Mammary epithelial cell (primary cell): ENCODE measurements at regions of chr16 and their contacts with region 1.

Region 1: GRCh38 chr16:11851294-11852091 is at the start of gene RSL1D1:
- DNase-seq: peak; percentile 94
- H3K4me3 ChIP-seq: peak within 1 kb of the TSS; percentile 77 to 100 (median 87)
- H3K27ac ChIP-seq: peak within 1 kb of the TSS; percentile 70
- H3K4me1 ChIP-seq: peaks cover 11% of the 10 kb centered on the region
- H3K27me3 ChIP-seq: no peaks in the 10 kb centered on the region
- CTCF ChIP-seq: no peak
- total RNA-seq, gene RSL1D1: 127 to 209 TPM

Region 2: GRCh38 chr16:11797166-11797956 is 54.1 kb before region 1 on chr16 and contains the start of gene ZC3H7A:
- CTCF ChIA-PET with region 1: no interaction called
- dilution Hi-C with region 1: no loop called
- in situ Hi-C with region 1: no loop called
- intact Hi-C with region 1: no loop called
- DNase-seq: peak; percentile 97
- H3K4me3 ChIP-seq: peak within 1 kb of the TSS; percentile 80 to 98 (median 82)
- H3K27ac ChIP-seq: peak within 1 kb of the TSS; percentile 92
- H3K4me1 ChIP-seq: peaks cover 47% of the 10 kb centered on the region
- H3K27me3 ChIP-seq: no peaks in the 10 kb centered on the region
- CTCF ChIP-seq: peak; percentile 39 to 43
- total RNA-seq, gene ZC3H7A: 42.5 to 64.1 TPM

Region 3: DNA sequence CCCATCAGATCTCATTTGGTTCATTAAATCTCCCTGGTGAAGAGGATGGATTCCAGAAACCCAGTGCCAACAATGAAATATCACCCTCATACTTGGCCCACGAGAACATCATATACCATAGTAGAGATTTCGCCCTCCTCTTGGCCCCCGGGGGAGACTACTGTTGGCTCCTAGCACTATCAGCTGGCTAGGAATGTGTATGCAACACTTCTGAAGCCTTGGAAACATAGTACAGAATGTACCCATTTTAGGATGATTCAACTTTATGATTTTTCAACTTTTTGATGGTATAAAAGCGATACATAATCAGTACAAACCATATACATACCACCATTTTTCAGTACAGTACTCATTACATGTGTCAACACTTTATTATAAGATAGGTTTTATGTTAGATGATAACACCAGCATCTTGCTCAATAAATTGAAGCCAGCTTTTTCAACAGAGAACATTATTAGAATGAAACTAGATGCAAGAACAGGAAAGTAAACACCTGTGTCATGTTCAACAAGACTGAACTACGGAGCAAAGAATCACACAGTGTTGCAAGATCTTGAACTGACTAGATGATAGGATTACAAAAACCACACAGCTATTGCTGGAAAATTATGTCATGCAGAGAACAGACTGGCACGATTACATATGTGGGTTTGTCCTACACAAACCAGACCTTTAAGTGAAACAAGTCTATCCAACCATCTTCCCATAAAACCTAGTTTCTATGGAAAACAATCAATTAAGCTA is 17.4 kb before region 1 on chr16:
- CTCF ChIA-PET with region 1: no interaction called
- dilution Hi-C with region 1: no loop called
- in situ Hi-C with region 1: no loop called
- intact Hi-C with region 1: loop called (anchors 2 kb)
- DNase-seq: peak; percentile 92
- H3K4me3 ChIP-seq: no peak overlapping the region
- H3K27ac ChIP-seq: peak overlapping the region; percentile 11
- H3K4me1 ChIP-seq: peaks cover 3% of the 10 kb centered on the region
- H3K27me3 ChIP-seq: no peaks in the 10 kb centered on the region
- CTCF ChIP-seq: no peak

Region 4: DNA sequence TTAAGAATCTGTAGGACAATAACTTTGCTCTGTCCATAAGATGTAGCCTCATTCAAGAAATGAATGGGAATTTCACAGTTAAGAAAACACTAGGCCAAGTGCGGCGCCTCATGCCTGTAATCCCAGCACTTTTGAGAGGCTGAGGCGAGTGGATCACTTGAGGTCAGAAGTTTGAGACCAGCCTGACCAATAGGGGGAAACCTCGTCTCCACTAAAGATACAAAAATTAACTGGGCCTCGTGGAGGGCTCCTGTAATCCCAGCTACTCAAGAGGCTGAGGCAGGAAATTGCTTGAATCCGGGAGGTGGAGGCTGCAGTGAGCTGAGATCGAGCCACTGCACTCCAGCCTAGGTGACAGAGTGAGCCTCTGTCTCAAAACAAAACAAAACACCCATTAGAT is 19.7 kb after region 1 on chr16:
- CTCF ChIA-PET with region 1: no interaction called
- dilution Hi-C with region 1: no loop called
- in situ Hi-C with region 1: no loop called
- intact Hi-C with region 1: loop called (anchors 1 kb)
- DNase-seq: no peak
- H3K4me3 ChIP-seq: no peak overlapping the region
- H3K27ac ChIP-seq: no peak overlapping the region
- H3K4me1 ChIP-seq: peaks cover 14% of the 10 kb centered on the region
- H3K27me3 ChIP-seq: no peaks in the 10 kb centered on the region
- CTCF ChIP-seq: no peak

Region 5: GRCh38 chr16:11977376-11978041 is 126.0 kb after region 1 on chr16:
- CTCF ChIA-PET with region 1: no interaction called
- dilution Hi-C with region 1: no loop called
- in situ Hi-C with region 1: no loop called
- intact Hi-C with region 1: loop called (anchors 5 kb)
- DNase-seq: peak; percentile 69
- H3K4me3 ChIP-seq: peak overlapping the region; percentile 90 to 98 (median 91)
- H3K27ac ChIP-seq: peak overlapping the region; percentile 58
- H3K4me1 ChIP-seq: peaks cover 9% of the 10 kb centered on the region
- H3K27me3 ChIP-seq: no peaks in the 10 kb centered on the region
- CTCF ChIP-seq: no peak

Region 6: DNA sequence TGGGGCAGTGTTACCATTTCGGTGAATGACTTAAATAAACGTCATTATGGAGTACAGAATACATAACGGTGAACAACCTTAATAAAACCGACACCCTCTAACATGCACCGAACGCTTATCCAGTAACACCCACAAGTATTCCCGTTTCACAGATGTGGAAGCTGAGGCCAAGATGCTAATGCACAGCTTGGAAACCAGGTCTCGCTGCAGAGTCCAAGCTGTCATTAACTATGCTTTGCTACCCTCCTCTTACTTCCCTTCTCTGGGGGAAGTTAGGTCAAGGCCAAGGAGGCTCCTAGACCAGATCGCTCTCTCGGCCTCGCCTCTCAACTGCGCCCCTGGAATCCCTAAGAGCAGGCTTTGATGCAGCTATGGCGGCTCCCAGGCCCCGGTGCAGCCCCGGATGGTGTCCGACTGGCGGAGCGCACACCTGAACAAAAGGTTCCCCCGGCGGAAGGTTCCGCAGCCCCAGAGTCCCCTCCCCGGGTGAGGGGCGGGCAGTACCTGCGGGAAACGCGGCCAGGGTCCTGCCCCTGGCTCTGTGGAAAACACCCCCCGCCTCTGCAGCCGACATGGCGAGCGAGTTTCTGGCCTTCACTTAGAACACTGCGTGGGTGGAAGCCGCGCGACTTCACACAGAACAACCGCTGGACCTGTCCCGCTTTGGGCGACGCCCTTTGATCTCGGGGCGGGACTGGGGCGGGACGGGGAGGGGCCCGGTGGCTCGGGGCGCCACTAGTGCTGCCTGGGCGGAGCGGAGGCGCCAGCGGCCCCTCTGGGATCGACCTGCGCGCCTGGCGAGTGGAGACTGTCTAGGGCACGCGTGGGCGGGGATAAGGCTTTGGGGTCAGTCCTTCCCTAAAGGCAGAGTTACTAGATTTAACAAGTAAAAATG is 952.0 kb after region 1 on chr16 and contains the start of gene CPPED1:
- CTCF ChIA-PET with region 1: no interaction called
- dilution Hi-C with region 1: no loop called
- in situ Hi-C with region 1: loop called in 1 of 2 experiments (anchors 25 kb)
- intact Hi-C with region 1: no loop called
- DNase-seq: peak; percentile 94
- H3K4me3 ChIP-seq: peak within 1 kb of the TSS; percentile 46 to 82 (median 73)
- H3K27ac ChIP-seq: peak within 1 kb of the TSS; percentile 45
- H3K4me1 ChIP-seq: peaks cover 9% of the 10 kb centered on the region
- H3K27me3 ChIP-seq: no peaks in the 10 kb centered on the region
- CTCF ChIP-seq: no peak
- total RNA-seq, gene CPPED1: 12.8 to 19.9 TPM